Dorsolateral prefrontal cortex (tissue), 120 donors: ENCODE measurements at regions of chr19 and their contacts with region 1.

Region 1: DNA sequence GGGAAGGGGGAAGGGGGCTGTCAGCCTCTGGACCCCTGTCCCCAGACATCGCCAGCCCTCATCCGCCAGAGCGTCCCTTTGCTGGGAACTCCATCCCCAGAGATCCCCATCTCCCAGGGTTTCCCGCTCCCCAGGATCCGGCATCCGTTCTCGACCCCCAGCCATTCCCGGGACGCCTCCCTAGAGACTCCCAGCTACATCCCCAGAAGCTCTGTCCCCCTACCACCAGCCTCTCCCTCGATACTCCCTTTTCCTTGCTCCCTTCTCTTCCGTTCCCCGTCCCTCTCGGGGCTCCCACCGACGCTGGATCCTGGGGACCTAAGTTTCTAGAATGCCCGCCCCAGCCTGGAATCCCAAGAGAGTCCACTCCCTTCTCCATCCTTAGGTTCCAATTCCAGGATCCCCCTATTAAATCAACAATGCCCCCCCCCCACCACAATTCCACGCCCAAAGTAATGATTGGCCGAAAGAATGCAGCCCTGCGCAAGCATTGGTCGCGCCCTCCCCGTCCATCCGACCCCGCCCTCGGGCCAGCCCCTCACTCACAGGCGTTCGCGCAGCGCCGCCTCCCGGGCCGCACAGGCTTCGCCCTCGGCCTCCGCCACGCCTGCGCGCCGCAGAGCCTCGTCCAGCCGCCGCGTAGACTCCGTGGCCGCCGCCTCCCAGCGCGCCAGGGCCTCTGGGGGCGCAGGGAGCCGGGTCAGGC is 3.2 kb downstream of the CCDC194 start:
- DNase-seq: peak; percentile 46 to 91 (median 86)
- H3K4me3 ChIP-seq: peak overlapping the region; percentile 36 to 73 (median 60)
- H3K27ac ChIP-seq: peak overlapping the region in 4 of 59 donors; percentile 25 to 62 (median 34)
- H3K27me3 ChIP-seq: peaks cover 0 to 21% (median 0%) of the 10 kb centered on the region in 45 donors
- CTCF ChIP-seq: peak; percentile 35 to 87 (median 72)

Region 2: DNA sequence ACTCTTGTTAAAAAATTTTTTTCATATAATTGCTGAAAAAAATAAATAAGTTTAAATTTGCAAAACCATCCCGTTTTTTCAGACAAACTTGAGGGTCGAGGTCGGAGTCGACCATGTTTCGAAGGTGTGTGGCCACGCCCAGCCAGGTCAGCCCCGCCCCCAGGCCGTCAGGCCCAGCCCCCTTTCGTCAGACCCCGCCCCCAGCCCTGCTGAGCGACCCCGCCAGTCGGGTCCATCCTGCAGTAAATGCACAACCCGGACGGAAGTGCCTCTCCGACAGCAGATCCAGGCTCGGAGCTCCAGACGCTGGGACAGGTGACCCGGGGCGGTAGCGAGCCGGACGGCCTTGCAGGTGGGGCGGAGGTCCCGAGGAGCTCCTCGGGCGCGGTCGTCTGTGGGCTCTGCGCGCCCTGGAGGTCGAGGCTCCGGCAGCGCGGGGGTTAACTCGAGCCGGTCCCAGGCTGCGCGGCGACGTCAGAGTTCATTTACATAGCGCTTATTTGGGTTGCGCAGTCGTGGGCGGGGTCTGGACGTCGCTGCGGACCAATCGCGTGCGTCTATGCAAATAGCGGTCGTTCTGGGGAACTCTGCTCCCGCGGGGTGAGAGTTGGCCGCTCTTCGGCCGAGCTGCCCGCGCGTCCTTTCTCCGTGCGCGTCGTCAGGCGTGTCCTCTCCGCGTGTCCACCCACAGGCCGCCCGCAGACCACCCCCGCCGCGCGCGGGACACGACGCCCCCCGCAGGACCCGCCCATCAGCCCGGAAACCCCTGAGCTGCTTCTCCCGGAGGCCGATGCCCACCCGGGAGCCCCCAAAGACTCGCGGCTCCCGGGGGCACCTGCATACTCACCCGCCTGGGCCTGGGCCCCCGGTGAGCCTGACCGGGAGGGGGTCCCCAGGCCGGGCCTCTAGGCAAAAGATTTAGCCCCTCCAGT is 164.6 kb before region 1 on chr19 and contains the start of gene OCEL1:
- intact Hi-C with region 1: no loop called
- DNase-seq: peak; percentile 98 to 100 (median 99)
- H3K4me3 ChIP-seq: peak within 1 kb of the TSS; percentile 56 to 93 (median 76)
- H3K27ac ChIP-seq: peak within 1 kb of the TSS; percentile 19 to 97 (median 88)
- H3K27me3 ChIP-seq: no peaks in the 10 kb centered on the region
- CTCF ChIP-seq: peak in 14 of 56 donors; percentile 2 to 46 (median 18)
- total RNA-seq, gene OCEL1: 11.1 to 42.0 (median 24.9) TPM

Region 3: GRCh38 chr19:17346109-17346671 is 44.6 kb before region 1 on chr19:
- intact Hi-C with region 1: loop called (anchors 2 to 5 kb)
- DNase-seq: peak; percentile 63 to 84 (median 76)
- H3K4me3 ChIP-seq: no peak overlapping the region
- H3K27ac ChIP-seq: peak overlapping the region in 4 of 59 donors; percentile 16 to 30 (median 24)
- H3K27me3 ChIP-seq: peaks cover 0 to 20% (median 0%) of the 10 kb centered on the region in 45 donors
- CTCF ChIP-seq: peak; percentile 69 to 99 (median 95)